Transverse colon (tissue), 4 donors: ENCODE measurements at regions of chr2 and their contacts with region 1.

Region 1: DNA sequence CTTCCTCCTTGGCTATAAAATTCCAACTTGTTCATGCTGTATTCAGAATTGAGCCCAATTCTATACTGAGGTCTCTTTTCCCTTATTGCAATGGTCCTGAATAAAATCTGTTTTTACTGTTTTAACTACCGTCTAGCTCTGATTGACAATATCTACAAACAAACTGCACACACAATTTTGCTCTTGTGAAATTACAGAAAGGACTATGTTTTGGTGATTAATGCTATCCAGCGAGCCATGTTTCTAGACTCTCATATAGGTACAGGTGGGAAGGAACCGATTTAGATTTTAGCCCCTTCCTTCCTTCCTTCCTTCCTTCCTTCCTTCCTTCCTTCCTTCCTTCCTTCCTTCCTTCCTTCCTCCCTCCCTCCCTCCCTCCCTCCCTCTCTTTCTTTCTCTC is 254.4 kb downstream of the SLC4A3 start:
- DNase-seq: no peak
- H3K4me3 ChIP-seq: no peak overlapping the region
- H3K27ac ChIP-seq: no peak overlapping the region
- H3K4me1 ChIP-seq: no peaks in the 10 kb centered on the region
- H3K27me3 ChIP-seq: no peaks in the 10 kb centered on the region
- CTCF ChIP-seq: no peak
- EP300 ChIP-seq: no peak
- POLR2A ChIP-seq: no peak

Region 2: DNA sequence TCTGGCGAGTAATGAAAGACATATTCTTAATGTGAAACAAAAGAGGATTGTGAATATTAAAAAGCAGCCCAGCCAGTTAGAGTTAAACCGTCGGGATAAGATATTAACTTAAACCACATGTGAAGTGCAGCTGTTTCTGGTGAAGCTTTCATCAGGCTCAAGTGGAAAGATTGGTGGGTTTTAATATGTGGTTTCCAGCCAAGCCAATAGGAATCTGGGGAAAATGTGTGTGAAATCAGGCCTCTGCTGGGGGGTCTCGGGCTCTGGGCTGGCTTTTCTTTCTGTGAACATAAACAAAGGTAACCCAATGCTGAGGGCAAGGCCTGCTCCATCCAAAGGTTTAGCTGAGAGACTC is 25.1 kb after region 1 on chr2:
- in situ Hi-C with region 1: no loop called
- intact Hi-C with region 1: loop called (anchors 2 kb)
- DNase-seq: no peak
- H3K4me3 ChIP-seq: no peak overlapping the region
- H3K27ac ChIP-seq: no peak overlapping the region
- H3K4me1 ChIP-seq: no peaks in the 10 kb centered on the region
- H3K27me3 ChIP-seq: no peaks in the 10 kb centered on the region
- CTCF ChIP-seq: no peak
- EP300 ChIP-seq: no peak
- POLR2A ChIP-seq: no peak

Region 3: DNA sequence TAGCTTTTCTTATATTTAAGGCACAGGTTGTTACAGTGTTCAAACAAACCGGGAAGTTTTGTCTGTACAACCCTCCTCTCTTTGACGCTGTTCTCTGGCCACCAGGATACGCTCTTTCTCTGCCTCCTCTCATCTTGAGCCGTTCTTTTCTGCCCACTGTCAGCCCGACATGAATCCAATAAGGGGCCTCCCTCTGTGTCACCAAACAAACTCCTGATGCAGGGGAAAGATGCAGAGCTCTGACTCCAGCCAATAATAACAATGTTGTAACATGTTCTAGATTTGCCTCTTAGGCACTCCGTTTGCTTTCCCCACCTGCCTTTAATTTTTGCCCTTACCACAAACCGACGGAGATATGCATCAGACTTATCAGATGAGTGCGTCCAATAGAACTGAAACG is 194.9 kb after region 1 on chr2:
- in situ Hi-C with region 1: no loop called
- intact Hi-C with region 1: no loop called
- DNase-seq: no peak
- H3K4me3 ChIP-seq: no peak overlapping the region
- H3K27ac ChIP-seq: no peak overlapping the region
- H3K4me1 ChIP-seq: no peaks in the 10 kb centered on the region
- H3K27me3 ChIP-seq: no peaks in the 10 kb centered on the region
- CTCF ChIP-seq: no peak
- EP300 ChIP-seq: no peak
- POLR2A ChIP-seq: no peak